K562 (cell line): ENCODE measurements at regions of chr1 and their contacts with region 1.

Region 1: GRCh38 chr1:155277070-155277895 is at the start of gene HCN3:
- DNase-seq: peak; percentile 97 to 99 (median 98)
- ATAC-seq: peak; percentile 83
- H3K4me3 ChIP-seq: peak within 1 kb of the TSS; percentile 57
- H3K27ac ChIP-seq: peak within 1 kb of the TSS; percentile 55
- H3K4me1 ChIP-seq: peaks cover 21 to 39% of the 10 kb centered on the region in 2 experiments; a peak in 4 of 5 replicates
- H3K27me3 ChIP-seq: no peaks in the 10 kb centered on the region
- CTCF ChIP-seq: peak; percentile 62 to 85 (median 74)
- EP300 ChIP-seq: no peak
- POLR2A ChIP-seq: 0 out of 2 replicates have a peak, but pooled peaks have one; percentile 26
- RAD21 ChIP-seq: peak; percentile 64 to 82
- polyA plus RNA-seq, gene HCN3: 0.91 to 1.0 TPM

Region 2: GRCh38 chr1:155208541-155209311 is 68.6 kb before region 1 on chr1 and contains the start of gene MTX1:
- CTCF ChIA-PET with region 1: no interaction called
- POLR2A ChIA-PET with region 1: no interaction called
- in situ Hi-C with region 1: no loop called
- intact Hi-C with region 1: no loop called
- DNase-seq: peak; percentile 90 to 95 (median 92)
- ATAC-seq: peak; percentile 93
- H3K4me3 ChIP-seq: peak within 1 kb of the TSS; percentile 100
- H3K27ac ChIP-seq: peak within 1 kb of the TSS; percentile 97
- H3K4me1 ChIP-seq: peaks cover 19 to 30% of the 10 kb centered on the region in 2 experiments
- H3K27me3 ChIP-seq: no peaks in the 10 kb centered on the region
- CTCF ChIP-seq: no peak
- EP300 ChIP-seq: peak; percentile 11; the same call in 1 of the 2 replicates
- POLR2A ChIP-seq: peak; percentile 76
- RAD21 ChIP-seq: no peak
- polyA plus RNA-seq, gene MTX1: 29.1 to 66.3 TPM

Region 3: DNA sequence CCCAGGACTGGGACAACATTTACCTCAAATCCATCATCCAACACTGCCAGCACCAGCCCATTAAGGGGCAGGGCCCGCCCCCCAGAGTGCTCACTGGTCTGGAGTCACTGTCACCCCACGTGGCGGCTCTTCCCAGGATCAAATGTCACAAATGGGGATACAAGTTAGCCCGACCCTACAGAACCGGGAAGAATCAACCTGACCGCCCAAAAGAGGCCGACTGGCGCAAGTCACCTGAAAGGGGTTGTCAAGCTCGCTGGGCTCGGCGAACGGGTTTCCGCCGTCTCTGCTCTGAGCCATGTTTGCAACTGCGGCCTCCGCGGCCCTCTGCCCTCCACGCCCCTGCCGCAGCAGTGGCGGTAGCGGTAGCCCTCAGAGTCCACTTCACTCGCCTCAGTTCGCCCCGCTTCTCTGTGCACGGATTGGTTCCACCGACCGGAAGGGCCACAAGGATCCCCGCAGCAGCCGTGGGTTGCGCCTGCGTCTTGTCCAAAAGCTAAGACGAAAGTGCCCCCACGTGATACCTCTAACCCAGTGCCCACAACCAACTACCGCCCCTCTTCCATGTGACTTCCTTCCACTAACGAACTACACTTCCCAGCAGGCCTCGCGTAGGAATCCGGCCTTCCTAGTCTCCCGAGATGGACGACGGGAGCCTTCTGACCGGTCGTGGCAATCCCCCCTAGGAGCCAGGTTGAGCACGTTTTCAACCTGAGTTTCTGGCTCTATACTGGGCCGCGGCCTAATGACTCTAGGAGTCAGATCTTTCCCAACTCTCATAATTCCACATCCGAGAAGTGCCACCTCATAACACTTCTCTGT is 15.2 kb before region 1 on chr1 and contains the start of gene SCAMP3:
- CTCF ChIA-PET with region 1: no interaction called
- POLR2A ChIA-PET with region 1: interaction called, 22 read pairs
- in situ Hi-C with region 1: no loop called
- intact Hi-C with region 1: loop called (anchors 1 kb)
- DNase-seq: peak; percentile 90 to 98 (median 94)
- ATAC-seq: peak; percentile 97
- H3K4me3 ChIP-seq: peak within 1 kb of the TSS; percentile 65
- H3K27ac ChIP-seq: peak within 1 kb of the TSS; percentile 64
- H3K4me1 ChIP-seq: peaks cover 7 to 23% of the 10 kb centered on the region in 2 experiments; a peak in 4 of 5 replicates
- H3K27me3 ChIP-seq: no peaks in the 10 kb centered on the region
- CTCF ChIP-seq: no peak
- EP300 ChIP-seq: no peak
- POLR2A ChIP-seq: peak; percentile 93
- RAD21 ChIP-seq: peak in 1 of 2 experiments; percentile 30; a peak in 2 of 4 replicates
- polyA plus RNA-seq, gene SCAMP3: 72.9 to 83.3 TPM

Region 4: GRCh38 chr1:155300553-155301329 is 23.5 kb after region 1 on chr1:
- CTCF ChIA-PET with region 1: interaction called, 3 read pairs
- POLR2A ChIA-PET with region 1: interaction called, 3 read pairs
- in situ Hi-C with region 1: no loop called
- intact Hi-C with region 1: loop called (anchors 2 kb)
- DNase-seq: peak in 2 of 4 experiments; percentile 28 to 33
- ATAC-seq: peak; percentile 66
- H3K4me3 ChIP-seq: peak overlapping the region; percentile 43
- H3K27ac ChIP-seq: peak overlapping the region; percentile 78
- H3K4me1 ChIP-seq: peaks cover 18 to 33% of the 10 kb centered on the region in 2 experiments; a peak in 4 of 5 replicates
- H3K27me3 ChIP-seq: no peaks in the 10 kb centered on the region
- CTCF ChIP-seq: no peak
- EP300 ChIP-seq: no peak
- POLR2A ChIP-seq: no peak; the same call in 1 of the 2 replicates
- RAD21 ChIP-seq: no peak

Region 5: GRCh38 chr1:155308493-155309422 is 31.5 kb after region 1 on chr1 and contains the start of gene FDPS:
- CTCF ChIA-PET with region 1: interaction called, 5 read pairs
- POLR2A ChIA-PET with region 1: interaction called, 5 read pairs
- in situ Hi-C with region 1: no loop called
- intact Hi-C with region 1: loop called (anchors 1 kb)
- DNase-seq: peak; percentile 97 to 100 (median 98)
- ATAC-seq: peak; percentile 97
- H3K4me3 ChIP-seq: peak within 1 kb of the TSS; percentile 75
- H3K27ac ChIP-seq: peak within 1 kb of the TSS; percentile 93
- H3K4me1 ChIP-seq: peaks cover 23 to 35% of the 10 kb centered on the region in 2 experiments; a peak in 4 of 5 replicates
- H3K27me3 ChIP-seq: no peaks in the 10 kb centered on the region
- CTCF ChIP-seq: 0 out of 6 replicates have a peak, but pooled peaks of 1 of the 3 experiments have one; percentile 1
- EP300 ChIP-seq: no peak
- POLR2A ChIP-seq: peak; percentile 89
- RAD21 ChIP-seq: no peak
- polyA plus RNA-seq, gene FDPS: 864 to 884 TPM